ENCODE measurements at regions of chr1 and their contacts with region 1.

Region 1: DNA sequence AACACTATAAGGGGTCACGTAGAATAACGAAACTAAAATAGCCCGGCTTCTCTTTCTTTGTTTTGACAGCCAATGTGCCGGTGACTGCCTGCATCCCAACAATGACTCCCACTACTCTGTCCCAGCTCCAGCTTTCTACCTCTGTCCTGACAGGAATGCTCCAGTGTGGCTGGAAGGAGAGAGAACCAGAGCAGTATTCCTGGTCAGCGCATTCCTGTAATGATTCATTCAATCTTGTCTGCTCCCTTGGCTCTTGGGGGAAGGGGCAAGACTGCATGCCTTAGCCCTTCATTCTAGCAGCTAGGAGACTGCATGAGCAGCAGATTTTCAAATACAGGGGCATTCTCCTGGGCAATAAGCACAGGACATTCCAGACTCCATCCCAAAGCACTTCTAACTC is 132.1 kb upstream of the PRMT6 start:
- DNase-seq: peak; percentile 24
- H3K4me3 ChIP-seq: no peak overlapping the region
- H3K27ac ChIP-seq: peak overlapping the region; percentile 98
- H3K4me1 ChIP-seq: peaks cover 74% of the 10 kb centered on the region
- H3K27me3 ChIP-seq: no peaks in the 10 kb centered on the region
- CTCF ChIP-seq: no peak

Region 2: GRCh38 chr1:106651028-106651766 is 273.2 kb before region 1 on chr1:
- CTCF ChIA-PET with region 1: no interaction called
- POLR2A ChIA-PET with region 1: no interaction called
- intact Hi-C with region 1: loop called (anchors 2 kb)
- DNase-seq: peak; percentile 88
- H3K4me3 ChIP-seq: peak overlapping the region; percentile 12
- H3K27ac ChIP-seq: peak overlapping the region; percentile 53
- H3K4me1 ChIP-seq: peaks cover 34% of the 10 kb centered on the region
- H3K27me3 ChIP-seq: no peaks in the 10 kb centered on the region
- CTCF ChIP-seq: peak; percentile 55; the same call in 1 of the 2 replicates

Region 3: GRCh38 chr1:106861110-106861509 is 63.2 kb before region 1 on chr1:
- CTCF ChIA-PET with region 1: interaction called, 6 read pairs
- POLR2A ChIA-PET with region 1: no interaction called
- intact Hi-C with region 1: loop called (anchors 2 kb)
- DNase-seq: peak; percentile 55
- H3K4me3 ChIP-seq: no peak overlapping the region
- H3K27ac ChIP-seq: peak overlapping the region; percentile 88
- H3K4me1 ChIP-seq: peaks cover 10% of the 10 kb centered on the region
- H3K27me3 ChIP-seq: no peaks in the 10 kb centered on the region
- CTCF ChIP-seq: no peak

Region 4: DNA sequence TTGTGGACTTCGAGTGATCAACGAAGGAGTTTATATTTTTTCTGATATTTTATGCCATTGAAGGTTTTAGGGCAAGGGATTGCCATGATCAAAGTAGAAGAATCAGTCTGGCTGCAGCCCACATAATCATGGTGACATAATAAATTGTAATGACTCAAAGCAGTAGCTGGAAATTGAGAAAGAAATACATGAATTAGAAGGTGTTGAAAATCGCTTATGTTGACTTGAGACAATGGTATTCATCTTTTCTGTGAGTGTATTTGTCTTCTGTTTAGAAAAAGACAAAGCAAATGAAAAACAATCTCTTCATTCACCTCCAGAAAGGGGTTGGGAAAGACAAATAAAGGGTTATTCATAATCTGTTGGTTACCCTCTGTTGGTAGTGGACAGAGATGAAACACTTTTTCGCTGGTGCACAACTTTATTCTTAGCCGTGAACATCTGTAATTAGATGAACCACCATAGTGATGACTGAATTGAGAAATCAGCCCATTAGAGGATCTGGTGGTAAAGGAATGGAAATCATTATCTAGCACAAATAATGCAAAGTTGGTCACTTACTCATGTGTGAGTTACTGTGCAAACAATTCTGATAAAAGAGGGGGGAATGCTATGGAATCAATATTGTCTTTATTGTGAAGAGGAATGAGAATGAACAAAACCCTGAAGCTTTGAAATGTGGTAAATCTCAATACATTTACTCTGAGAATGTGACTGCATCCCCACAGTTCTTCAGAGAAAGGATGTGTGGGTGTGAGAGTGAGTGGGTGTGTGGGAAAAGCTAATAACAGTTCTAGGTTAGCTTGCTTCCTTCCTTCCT is 338.3 kb after region 1 on chr1:
- CTCF ChIA-PET with region 1: interaction called, 4 read pairs
- POLR2A ChIA-PET with region 1: interaction called, 11 read pairs
- intact Hi-C with region 1: loop called (anchors 1 kb)
- DNase-seq: peak; percentile 98
- H3K4me3 ChIP-seq: peak overlapping the region; percentile 0
- H3K27ac ChIP-seq: peak overlapping the region; percentile 96
- H3K4me1 ChIP-seq: peaks cover 80% of the 10 kb centered on the region
- H3K27me3 ChIP-seq: no peaks in the 10 kb centered on the region
- CTCF ChIP-seq: no peak

Region 5: GRCh38 chr1:107750358-107750959 is 826.1 kb after region 1 on chr1:
- CTCF ChIA-PET with region 1: no interaction called
- POLR2A ChIA-PET with region 1: no interaction called
- intact Hi-C with region 1: loop called (anchors 2 kb)
- DNase-seq: peak; percentile 90
- H3K4me3 ChIP-seq: no peak overlapping the region
- H3K27ac ChIP-seq: no peak overlapping the region
- H3K4me1 ChIP-seq: peaks cover 25% of the 10 kb centered on the region
- H3K27me3 ChIP-seq: no peaks in the 10 kb centered on the region
- CTCF ChIP-seq: peak; percentile 86

Measured in A673 (cell line).